ENCODE measurements at regions of chr5 and their contacts with region 1.

Region 1: DNA sequence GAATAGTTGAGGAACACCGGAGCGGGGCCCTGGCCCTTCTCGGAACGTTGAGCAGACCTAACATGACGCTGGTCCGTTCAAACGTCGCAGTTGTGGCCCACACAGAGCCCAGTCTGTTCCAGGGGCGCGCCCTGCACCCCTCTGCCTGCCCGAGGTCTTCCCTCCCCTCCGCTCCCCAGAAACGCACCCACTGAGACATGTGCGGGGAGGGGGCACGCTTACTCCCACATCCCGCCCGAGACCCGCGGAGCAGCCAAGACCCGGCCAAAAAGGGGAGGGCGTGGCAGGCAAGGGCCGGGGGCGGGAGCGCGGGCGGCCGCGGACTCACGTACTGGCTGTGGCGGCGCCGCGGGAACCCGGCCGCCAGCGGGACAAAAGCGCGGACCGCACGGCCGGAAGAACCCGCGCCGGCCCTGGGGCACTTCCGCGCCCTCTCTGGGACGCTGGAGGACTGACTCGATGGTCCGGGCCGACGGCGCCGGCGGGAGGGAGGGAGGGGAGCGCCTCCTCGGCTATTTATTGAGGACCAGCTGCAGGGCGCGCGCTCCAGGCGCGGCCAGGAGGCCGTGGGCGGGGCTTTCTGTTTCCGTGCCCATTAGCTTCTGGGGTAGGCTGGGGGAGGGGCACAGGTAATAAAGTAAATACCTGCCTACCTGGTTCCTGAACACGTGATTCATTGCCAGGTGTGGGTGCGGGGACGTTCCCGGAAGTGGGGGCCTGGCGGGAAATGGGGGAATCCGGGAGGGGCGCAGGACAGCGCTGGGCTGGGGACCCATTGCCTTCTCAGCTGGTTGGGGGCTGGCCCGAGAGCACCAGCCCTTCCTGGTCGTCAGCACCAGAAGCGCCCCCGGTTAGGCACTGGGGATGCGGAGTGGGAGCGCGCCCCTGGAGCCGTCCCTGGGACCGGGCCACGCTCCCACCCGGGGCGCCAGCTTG is at the start of gene ZFP62:
- DNase-seq: peak; percentile 92
- ATAC-seq: peak; percentile 82
- H3K4me3 Mint-ChIP-seq: peak within 1 kb of the TSS; percentile 94
- H3K27ac Mint-ChIP-seq: peak within 1 kb of the TSS; percentile 94
- H3K4me1 Mint-ChIP-seq: peaks cover 18% of the 10 kb centered on the region
- H3K27me3 Mint-ChIP-seq: no peaks in the 10 kb centered on the region
- CTCF ChIP-seq: no peak
- total RNA-seq, gene ZFP62: 43.7 and 45.6 TPM in 2 replicates

Region 2: GRCh38 chr5:180291943-180292831 is 569.0 kb before region 1 on chr5 and contains the start of gene MAPK9:
- CTCF ChIA-PET with region 1: no interaction called
- POLR2A ChIA-PET with region 1: no interaction called
- intact Hi-C with region 1: loop called (anchors 5 kb)
- DNase-seq: peak; percentile 87
- ATAC-seq: peak; percentile 78
- H3K4me3 Mint-ChIP-seq: peak within 1 kb of the TSS; percentile 92
- H3K27ac Mint-ChIP-seq: peak within 1 kb of the TSS; percentile 89
- H3K4me1 Mint-ChIP-seq: peaks cover 33% of the 10 kb centered on the region
- H3K27me3 Mint-ChIP-seq: no peaks in the 10 kb centered on the region
- CTCF ChIP-seq: no peak
- total RNA-seq, gene MAPK9: 26.9 and 30.3 TPM in 2 replicates

Region 3: DNA sequence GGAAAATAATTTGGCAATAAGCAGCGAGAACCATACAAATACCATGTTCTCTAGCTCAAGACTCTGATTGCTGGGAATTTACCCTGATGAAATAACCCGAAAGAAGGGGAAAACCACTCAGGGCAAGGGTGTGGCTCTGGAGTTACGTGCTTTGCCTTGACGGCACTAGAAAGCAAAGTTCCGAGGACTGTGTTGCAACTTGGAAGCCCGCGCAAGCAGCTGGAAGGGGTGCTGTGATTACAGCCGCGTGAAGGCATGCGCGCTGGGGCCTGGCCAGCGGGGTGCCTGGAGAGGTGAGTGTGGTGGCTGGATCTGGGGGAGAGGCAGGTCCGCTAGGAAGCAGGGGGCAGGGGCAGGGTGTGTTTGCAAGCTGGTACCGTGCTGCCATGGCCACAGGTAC is 419.6 kb before region 1 on chr5:
- CTCF ChIA-PET with region 1: no interaction called
- POLR2A ChIA-PET with region 1: no interaction called
- intact Hi-C with region 1: no loop called
- DNase-seq: no peak
- ATAC-seq: no peak
- H3K4me3 Mint-ChIP-seq: no peak overlapping the region
- H3K27ac Mint-ChIP-seq: no peak overlapping the region
- H3K4me1 Mint-ChIP-seq: no peaks in the 10 kb centered on the region
- H3K27me3 Mint-ChIP-seq: peaks cover 7% of the 10 kb centered on the region
- CTCF ChIP-seq: no peak

Region 4: GRCh38 chr5:180802325-180803180 is 58.6 kb before region 1 on chr5 and contains the start of gene MGAT1:
- CTCF ChIA-PET with region 1: no interaction called
- POLR2A ChIA-PET with region 1: interaction called, 59 read pairs
- intact Hi-C with region 1: loop called (anchors 1 kb)
- DNase-seq: peak; percentile 84
- ATAC-seq: peak; percentile 60
- H3K4me3 Mint-ChIP-seq: peak within 1 kb of the TSS; percentile 91
- H3K27ac Mint-ChIP-seq: peak within 1 kb of the TSS; percentile 91
- H3K4me1 Mint-ChIP-seq: peaks cover 84% of the 10 kb centered on the region
- H3K27me3 Mint-ChIP-seq: no peaks in the 10 kb centered on the region
- CTCF ChIP-seq: no peak
- total RNA-seq, gene MGAT1: 66.9 and 74.5 TPM in 2 replicates

Region 5: GRCh38 chr5:180837478-180837877 is 23.7 kb before region 1 on chr5:
- CTCF ChIA-PET with region 1: no interaction called
- POLR2A ChIA-PET with region 1: interaction called, 118 read pairs
- intact Hi-C with region 1: loop called (anchors 1 kb)
- DNase-seq: no peak
- ATAC-seq: no peak
- H3K4me3 Mint-ChIP-seq: no peak overlapping the region
- H3K27ac Mint-ChIP-seq: no peak overlapping the region
- H3K4me1 Mint-ChIP-seq: peaks cover 27% of the 10 kb centered on the region
- H3K27me3 Mint-ChIP-seq: no peaks in the 10 kb centered on the region
- CTCF ChIP-seq: no peak

Region 6: DNA sequence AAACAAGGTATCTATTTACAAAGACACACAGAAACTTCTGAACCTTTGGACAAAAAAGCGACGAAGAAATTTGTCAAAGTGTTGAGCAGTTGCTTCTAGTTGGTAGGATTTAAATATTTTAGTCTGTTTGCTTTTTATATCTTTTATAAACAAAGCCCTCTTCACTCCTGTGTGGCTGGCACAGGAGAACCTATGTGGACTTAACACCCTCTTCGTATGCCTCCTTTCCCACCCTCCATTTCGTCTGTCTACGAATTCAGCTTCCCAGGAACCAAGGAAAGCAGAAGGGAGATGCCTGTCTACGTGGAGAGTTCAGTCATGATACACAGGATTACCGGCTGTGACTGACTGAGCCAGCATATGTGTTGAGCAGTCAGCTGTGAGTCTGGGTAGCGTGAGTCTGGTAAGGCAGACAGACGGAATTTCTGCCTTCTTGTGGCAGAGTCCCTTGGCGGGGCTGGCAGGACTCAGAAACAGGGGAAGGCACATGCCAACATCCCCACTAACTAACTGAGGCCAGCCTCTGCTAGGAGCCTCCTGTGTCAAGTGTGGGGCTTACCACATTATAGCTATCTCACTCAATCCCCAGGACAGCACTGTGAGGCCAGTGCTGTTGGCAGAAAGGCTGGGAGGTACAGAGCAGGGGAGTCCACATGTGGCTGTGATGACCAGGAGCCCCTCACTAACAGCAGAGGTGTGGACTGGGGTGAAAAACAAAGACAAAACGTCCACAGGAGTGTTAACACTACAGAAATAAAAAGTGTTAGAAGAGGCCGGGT is 13.8 kb after region 1 on chr5:
- CTCF ChIA-PET with region 1: no interaction called
- POLR2A ChIA-PET with region 1: no interaction called
- intact Hi-C with region 1: no loop called
- DNase-seq: no peak
- ATAC-seq: no peak
- H3K4me3 Mint-ChIP-seq: no peak overlapping the region
- H3K27ac Mint-ChIP-seq: no peak overlapping the region
- H3K4me1 Mint-ChIP-seq: peaks cover 12% of the 10 kb centered on the region
- H3K27me3 Mint-ChIP-seq: peaks cover 3% of the 10 kb centered on the region
- CTCF ChIP-seq: no peak

Region 7: DNA sequence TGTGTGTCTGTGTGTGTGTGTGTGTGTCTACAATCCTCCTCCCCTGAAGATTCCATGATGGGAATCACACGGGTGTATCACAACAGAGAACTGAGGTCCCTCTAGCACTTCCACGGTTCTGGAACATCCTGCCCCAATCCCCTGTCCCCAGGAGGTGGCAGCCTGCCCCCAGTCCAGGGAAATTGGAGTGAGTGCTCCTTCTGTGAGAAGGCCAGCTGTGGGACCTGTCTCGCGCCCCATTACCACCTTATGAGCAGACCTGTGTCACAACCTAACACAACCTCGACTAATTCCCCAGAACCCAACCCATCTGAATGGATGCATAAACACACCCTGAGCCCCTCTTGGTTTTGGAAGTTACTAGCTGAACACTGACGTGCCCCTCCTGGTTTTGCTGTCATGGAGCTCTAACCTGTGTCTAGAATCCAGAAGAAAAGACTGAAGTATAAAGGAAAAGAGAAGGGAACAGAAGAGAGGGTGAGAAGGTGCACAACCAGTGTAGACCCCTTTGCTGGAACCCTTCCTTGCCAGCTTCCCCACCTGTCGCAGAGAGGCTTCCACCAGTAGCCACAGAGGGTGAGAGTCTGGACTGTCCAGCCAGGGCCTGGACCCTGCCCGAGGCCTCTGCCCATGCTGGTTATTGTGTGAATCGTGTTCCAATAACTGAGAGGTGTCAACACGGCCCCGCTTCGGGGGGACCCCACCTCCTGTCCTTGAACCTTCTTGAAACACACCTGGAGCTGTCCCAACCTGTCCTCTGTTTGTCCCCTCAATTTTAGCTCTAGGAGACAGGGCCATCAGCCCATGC is 182.3 kb after region 1 on chr5:
- CTCF ChIA-PET with region 1: no interaction called
- POLR2A ChIA-PET with region 1: no interaction called
- intact Hi-C with region 1: no loop called
- DNase-seq: no peak
- ATAC-seq: no peak
- H3K4me3 Mint-ChIP-seq: no peak overlapping the region
- H3K27ac Mint-ChIP-seq: no peak overlapping the region
- H3K4me1 Mint-ChIP-seq: peaks cover 8% of the 10 kb centered on the region
- H3K27me3 Mint-ChIP-seq: peaks cover 13% of the 10 kb centered on the region
- CTCF ChIP-seq: no peak

Region 8: DNA sequence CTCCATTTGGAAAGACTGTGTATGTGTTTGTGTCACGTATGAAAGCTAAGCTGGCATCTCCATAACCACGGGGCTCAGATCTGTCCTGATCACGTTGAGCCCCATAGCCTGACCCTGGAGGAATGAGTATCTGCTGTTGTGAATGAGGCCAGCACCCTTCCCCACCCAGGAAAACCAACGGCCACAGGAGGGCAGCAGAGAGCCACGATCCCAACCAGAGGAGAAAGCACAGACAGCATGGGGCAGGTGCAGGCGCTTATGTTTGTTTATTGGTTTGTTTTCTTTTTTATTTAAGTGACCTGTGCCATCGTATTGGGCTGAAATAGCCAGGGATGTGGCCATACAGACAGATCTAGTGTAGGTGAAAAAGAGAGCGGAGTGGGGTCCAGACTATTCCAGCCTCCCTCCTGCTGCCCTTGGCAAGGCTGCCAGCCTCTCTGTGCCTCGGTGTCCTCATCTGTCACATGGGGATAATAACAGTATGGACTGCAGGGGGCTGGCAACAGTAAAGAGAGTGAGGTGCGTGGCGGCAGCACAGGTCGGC is 298.2 kb after region 1 on chr5:
- CTCF ChIA-PET with region 1: no interaction called
- POLR2A ChIA-PET with region 1: no interaction called
- intact Hi-C with region 1: loop called (anchors 2 kb)
- DNase-seq: peak; percentile 87
- ATAC-seq: peak; percentile 74
- H3K4me3 Mint-ChIP-seq: peak overlapping the region; percentile 75
- H3K27ac Mint-ChIP-seq: peak overlapping the region; percentile 81
- H3K4me1 Mint-ChIP-seq: peaks cover 29% of the 10 kb centered on the region
- H3K27me3 Mint-ChIP-seq: peaks cover 10% of the 10 kb centered on the region
- CTCF ChIP-seq: no peak

Region 9: DNA sequence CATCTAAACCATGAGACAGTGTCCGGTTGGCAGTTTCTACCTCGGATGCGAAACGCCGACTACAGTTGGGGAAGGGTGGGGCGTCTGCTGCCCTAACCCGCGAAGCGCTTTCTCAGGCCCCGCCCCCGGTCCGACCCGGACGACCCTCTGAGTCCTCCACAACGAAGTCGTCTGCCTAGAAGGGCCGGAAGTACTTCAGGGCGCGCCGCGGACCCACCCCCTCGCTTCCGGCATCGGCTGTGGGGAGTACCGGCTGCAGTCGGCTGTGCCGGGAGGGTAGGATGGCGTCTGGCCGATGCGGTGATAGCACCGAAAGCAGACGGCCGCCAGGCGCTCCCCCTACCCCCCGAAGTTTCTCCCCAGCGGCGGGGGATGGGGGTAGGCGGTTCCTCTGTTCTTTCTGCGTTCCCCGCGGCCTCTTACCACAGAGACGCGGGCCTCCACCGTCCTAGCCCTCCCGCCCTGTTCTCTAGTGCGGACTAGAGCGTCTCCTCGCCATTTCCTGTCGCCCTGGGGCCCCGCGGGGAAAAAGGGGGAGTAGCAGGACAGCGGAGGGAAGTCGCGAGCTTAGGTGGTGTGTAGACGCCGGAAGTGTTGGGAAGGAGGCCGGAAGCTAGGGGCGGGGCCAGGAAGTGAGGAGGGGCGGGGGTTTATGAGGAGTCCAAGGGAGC is 362.0 kb after region 1 on chr5 and contains the start of gene TRIM41:
- CTCF ChIA-PET with region 1: no interaction called
- POLR2A ChIA-PET with region 1: interaction called, 15 read pairs
- intact Hi-C with region 1: loop called (anchors 1 kb)
- DNase-seq: peak; percentile 98
- ATAC-seq: peak; percentile 67
- H3K4me3 Mint-ChIP-seq: peak within 1 kb of the TSS; percentile 95
- H3K27ac Mint-ChIP-seq: peak within 1 kb of the TSS; percentile 98
- H3K4me1 Mint-ChIP-seq: peaks cover 51% of the 10 kb centered on the region
- H3K27me3 Mint-ChIP-seq: peaks cover 6% of the 10 kb centered on the region
- CTCF ChIP-seq: no peak
- total RNA-seq, gene TRIM41: 34.9 and 39.6 TPM in 2 replicates